ENCODE measurements at regions of chr17 and their contacts with region 1.

Region 1: GRCh38 chr17:52368886-52369285 is 210.4 kb upstream of the CA10 start:
- DNase-seq: no peak
- H3K4me3 ChIP-seq: no peak overlapping the region
- H3K27ac ChIP-seq: no peak overlapping the region
- H3K4me1 ChIP-seq: peaks cover 0 to 4% (median 0%) of the 10 kb centered on the region in 4 donors
- H3K27me3 ChIP-seq: no peaks in the 10 kb centered on the region
- CTCF ChIP-seq: no peak
- EP300 ChIP-seq: no peak
- POLR2A ChIP-seq: no peak

Region 2: DNA sequence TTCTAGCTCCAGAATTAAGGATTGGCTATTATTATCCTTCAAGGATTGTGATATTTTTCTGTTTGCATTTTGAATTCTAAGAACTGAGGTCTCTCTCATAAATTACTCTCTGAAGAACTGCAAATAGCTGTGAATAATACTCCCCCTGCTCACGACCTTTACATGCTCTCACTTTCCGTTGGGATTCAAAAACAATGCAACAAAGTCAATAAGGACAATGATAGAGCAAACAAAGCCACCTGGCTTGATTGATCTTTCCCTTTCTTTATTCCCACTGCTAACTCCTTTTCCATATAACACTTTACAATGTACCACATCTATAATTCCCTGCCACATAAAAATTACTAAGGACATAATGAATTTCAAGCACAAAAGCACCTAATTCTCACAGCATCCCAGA is 312.6 kb after region 1 on chr17:
- in situ Hi-C with region 1: no loop called
- intact Hi-C with region 1: loop called (anchors 5 kb)
- DNase-seq: no peak
- H3K4me3 ChIP-seq: no peak overlapping the region
- H3K27ac ChIP-seq: no peak overlapping the region
- H3K4me1 ChIP-seq: no peaks in the 10 kb centered on the region
- H3K27me3 ChIP-seq: no peaks in the 10 kb centered on the region
- CTCF ChIP-seq: no peak
- EP300 ChIP-seq: no peak
- POLR2A ChIP-seq: no peak